AG04450 (cell line): ENCODE measurements at regions of chr2 and their contacts with region 1.

Region 1: DNA sequence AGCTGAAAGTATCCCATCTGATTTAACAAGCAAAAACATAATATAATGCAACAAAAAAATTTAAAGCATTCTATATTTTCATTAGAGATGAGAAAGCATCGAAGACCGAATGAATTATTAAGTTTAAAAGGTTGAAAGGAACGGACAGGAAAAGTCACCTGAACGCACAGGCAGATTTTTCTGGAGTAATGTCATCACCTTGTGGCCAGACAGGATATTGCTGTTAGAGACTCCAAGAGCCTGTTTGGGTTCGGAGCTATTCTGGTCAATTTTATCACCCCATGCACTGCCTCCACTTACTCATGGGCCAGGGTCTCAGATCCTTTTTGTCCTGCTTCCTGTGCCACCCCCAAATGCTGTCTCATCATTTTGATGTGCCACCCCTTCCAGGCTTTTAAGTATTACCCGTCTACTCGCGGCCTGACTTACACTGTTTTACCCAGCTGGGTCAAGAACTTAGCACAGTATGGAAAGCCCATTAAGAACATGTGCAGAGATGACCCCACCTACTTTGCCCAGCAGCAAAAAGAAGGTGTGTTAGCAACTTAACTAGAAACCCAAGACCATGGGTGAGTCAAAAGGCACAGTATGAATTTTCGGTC is 27.3 kb downstream of the GKN2 start:
- DNase-seq: no peak
- H3K4me3 ChIP-seq: no peak overlapping the region
- H3K27ac ChIP-seq: no peak overlapping the region
- H3K27me3 ChIP-seq: peaks cover 5% of the 10 kb centered on the region
- CTCF ChIP-seq: peak; percentile 99

Region 2: DNA sequence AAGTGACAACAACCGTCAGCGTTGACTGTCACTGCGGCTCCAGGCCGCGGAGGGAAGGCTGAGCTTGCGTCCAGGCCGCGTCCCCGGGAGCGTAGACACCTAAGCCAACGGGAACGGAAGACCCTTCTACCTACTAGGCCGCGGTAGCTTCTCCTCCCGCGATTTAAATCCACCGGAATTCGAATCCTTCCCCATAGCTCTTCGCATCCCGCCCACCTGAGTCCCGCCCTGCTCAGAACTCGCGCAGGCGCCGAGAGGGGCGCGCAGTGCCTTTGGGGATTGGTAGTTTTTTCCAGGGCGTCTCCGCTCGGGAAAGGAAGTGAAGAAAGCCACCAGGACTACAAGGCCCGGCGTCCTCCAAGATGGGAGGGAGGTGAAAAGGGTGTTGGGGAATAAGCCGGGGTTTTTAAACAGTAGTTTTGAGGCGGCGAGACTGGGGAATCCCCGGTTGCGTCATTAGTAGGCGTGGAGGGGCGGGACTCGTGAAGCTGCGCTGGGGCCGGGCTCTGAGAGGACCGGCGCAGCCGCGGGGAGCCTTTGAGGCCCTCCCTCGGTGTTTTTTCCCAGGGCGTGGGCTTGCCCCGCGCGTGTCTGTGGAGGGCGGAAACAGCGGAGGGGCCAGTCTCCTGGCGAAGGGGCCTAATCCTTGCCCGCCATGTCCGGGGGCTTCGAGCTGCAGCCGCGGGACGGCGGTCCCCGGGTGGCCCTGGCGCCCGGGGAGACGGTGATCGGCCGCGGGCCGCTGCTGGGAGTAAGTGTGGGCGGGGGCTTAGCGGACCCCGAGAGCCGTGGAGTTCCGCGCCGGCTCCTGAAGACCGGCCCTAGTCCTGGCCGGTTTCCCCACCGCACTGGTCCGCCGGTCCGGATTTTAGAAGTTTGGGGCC is 458.1 kb before region 1 on chr2 and contains the starts of genes APLF and FBXO48:
- CTCF ChIA-PET with region 1: interaction called, 65 read pairs
- POLR2A ChIA-PET with region 1: no interaction called
- DNase-seq: peak; percentile 97
- H3K4me3 ChIP-seq: peak within 1 kb of the TSS; percentile 98
- H3K27ac ChIP-seq: peak within 1 kb of the TSS; percentile 77
- H3K27me3 ChIP-seq: no peaks in the 10 kb centered on the region
- CTCF ChIP-seq: no peak
- polyA plus RNA-seq, gene APLF: 2.5 and 3.6 TPM in 2 replicates
- polyA plus RNA-seq, gene FBXO48: 0.66 and 0.89 TPM in 2 replicates

Region 3: GRCh38 chr2:68487773-68488355 is 437.5 kb before region 1 on chr2:
- CTCF ChIA-PET with region 1: interaction called, 37 read pairs
- POLR2A ChIA-PET with region 1: no interaction called
- DNase-seq: no peak
- H3K4me3 ChIP-seq: no peak overlapping the region
- H3K27ac ChIP-seq: no peak overlapping the region
- H3K27me3 ChIP-seq: no peaks in the 10 kb centered on the region
- CTCF ChIP-seq: peak; percentile 49

Region 4: DNA sequence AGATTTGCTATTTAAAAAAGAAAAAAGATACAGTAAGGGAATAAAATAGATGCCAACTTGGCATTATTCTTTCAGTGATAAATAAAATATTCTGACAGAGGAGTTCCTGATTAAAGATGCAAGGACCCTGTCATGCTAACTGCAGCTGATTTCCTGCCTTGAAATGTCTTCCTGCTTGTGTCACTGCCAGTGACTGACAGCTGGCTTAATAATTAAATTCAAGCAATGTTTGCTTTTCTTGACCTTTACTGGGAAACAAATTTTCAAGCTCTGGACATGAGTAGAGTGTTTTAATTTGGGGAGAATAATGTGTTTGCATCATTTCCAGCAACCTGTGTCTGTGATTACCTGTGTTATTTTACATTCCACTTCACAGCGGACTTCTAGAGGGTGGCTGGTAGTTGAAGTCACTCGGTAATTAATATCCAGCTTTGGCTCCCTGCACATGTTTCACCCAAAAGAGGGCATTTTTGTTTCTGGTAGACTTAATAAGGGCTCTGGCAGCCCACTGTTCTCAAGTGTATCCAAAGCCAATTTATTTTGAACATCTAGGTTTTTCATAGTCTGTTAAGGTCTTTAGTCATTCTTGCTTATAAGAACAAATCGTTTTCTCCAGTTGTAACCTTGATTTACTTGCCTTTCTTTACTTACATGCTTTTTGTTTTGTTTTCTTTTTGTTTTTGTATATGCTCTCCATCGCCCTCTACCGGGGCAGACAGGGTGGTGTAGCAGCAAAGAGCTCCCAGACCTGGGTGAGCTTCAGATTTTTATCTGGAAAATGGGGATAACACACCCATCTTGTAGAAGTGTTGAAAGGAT is 330.5 kb before region 1 on chr2:
- CTCF ChIA-PET with region 1: interaction called, 15 read pairs
- POLR2A ChIA-PET with region 1: no interaction called
- DNase-seq: peak; percentile 3
- H3K4me3 ChIP-seq: no peak overlapping the region
- H3K27ac ChIP-seq: no peak overlapping the region
- H3K27me3 ChIP-seq: peaks cover 6% of the 10 kb centered on the region
- CTCF ChIP-seq: peak; percentile 92

Region 5: GRCh38 chr2:68721482-68722101 is 203.8 kb before region 1 on chr2:
- CTCF ChIA-PET with region 1: interaction called, 16 read pairs
- POLR2A ChIA-PET with region 1: no interaction called
- DNase-seq: no peak
- H3K4me3 ChIP-seq: no peak overlapping the region
- H3K27ac ChIP-seq: no peak overlapping the region
- H3K27me3 ChIP-seq: no peaks in the 10 kb centered on the region
- CTCF ChIP-seq: no peak

Region 6: GRCh38 chr2:68909793-68910674 is 15.4 kb before region 1 on chr2:
- CTCF ChIA-PET with region 1: interaction called, 20 read pairs
- POLR2A ChIA-PET with region 1: no interaction called
- DNase-seq: peak; percentile 46
- H3K4me3 ChIP-seq: no peak overlapping the region
- H3K27ac ChIP-seq: no peak overlapping the region
- H3K27me3 ChIP-seq: no peaks in the 10 kb centered on the region
- CTCF ChIP-seq: peak; percentile 95

Region 7: GRCh38 chr2:68936427-68936826 is 11.0 kb after region 1 on chr2:
- CTCF ChIA-PET with region 1: interaction called, 21 read pairs
- POLR2A ChIA-PET with region 1: no interaction called
- DNase-seq: no peak
- H3K4me3 ChIP-seq: no peak overlapping the region
- H3K27ac ChIP-seq: peak overlapping the region; percentile 66
- H3K27me3 ChIP-seq: no peaks in the 10 kb centered on the region
- CTCF ChIP-seq: no peak

Region 8: GRCh38 chr2:69131983-69132675 is 206.7 kb after region 1 on chr2:
- CTCF ChIA-PET with region 1: no interaction called
- POLR2A ChIA-PET with region 1: no interaction called
- DNase-seq: no peak
- H3K4me3 ChIP-seq: no peak overlapping the region
- H3K27ac ChIP-seq: no peak overlapping the region
- H3K27me3 ChIP-seq: no peaks in the 10 kb centered on the region
- CTCF ChIP-seq: no peak

Region 9: DNA sequence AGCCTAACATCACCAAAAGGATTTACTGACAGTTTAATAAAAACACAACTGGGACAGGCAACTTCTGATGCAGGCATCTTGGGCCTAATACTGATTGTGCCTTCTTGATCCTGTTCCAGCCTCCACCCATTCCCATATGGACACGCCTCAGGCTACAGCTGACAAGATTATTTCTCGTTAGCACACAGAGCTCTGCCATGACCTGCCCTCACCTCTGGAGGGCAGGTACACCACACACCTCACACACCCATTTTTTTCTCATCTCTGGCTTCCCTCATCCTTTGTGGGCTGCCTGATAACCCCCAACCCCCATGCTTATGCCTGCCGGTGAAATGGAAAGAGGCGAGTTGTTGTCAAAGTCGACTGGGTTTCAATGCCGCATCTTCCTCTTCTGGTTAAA is 234.6 kb after region 1 on chr2:
- CTCF ChIA-PET with region 1: no interaction called
- POLR2A ChIA-PET with region 1: no interaction called
- DNase-seq: no peak
- H3K4me3 ChIP-seq: no peak overlapping the region
- H3K27ac ChIP-seq: no peak overlapping the region
- H3K27me3 ChIP-seq: no peaks in the 10 kb centered on the region
- CTCF ChIP-seq: no peak